ENCODE measurements at regions of chr1 and their contacts with region 1.

Region 1: DNA sequence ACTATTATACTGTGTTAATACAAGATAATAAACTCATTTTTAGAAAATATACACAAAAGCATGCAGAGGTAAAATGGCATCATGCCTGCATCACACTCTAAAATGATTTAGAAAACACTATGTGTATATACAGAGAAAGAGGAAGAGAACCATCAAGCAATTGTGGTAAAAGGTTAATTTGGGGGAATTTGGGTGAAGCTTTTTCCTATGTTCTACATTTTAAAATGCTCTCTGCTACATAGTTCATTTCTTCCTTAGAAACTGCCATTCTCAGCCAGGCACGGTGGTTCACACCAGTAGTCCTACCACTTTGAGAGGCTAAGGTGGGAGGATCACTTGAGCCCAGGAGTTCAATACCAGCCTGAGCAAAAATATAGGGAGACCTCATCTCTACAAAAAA is 44.1 kb downstream of the GON4L start:
- DNase-seq: no peak
- ATAC-seq: no peak
- H3K4me3 ChIP-seq: no peak overlapping the region
- H3K27ac ChIP-seq: no peak overlapping the region
- H3K4me1 ChIP-seq: no peaks in the 10 kb centered on the region
- H3K27me3 ChIP-seq: no peaks in the 10 kb centered on the region
- CTCF ChIP-seq: no peak
- POLR2A ChIP-seq: no peak

Region 2: DNA sequence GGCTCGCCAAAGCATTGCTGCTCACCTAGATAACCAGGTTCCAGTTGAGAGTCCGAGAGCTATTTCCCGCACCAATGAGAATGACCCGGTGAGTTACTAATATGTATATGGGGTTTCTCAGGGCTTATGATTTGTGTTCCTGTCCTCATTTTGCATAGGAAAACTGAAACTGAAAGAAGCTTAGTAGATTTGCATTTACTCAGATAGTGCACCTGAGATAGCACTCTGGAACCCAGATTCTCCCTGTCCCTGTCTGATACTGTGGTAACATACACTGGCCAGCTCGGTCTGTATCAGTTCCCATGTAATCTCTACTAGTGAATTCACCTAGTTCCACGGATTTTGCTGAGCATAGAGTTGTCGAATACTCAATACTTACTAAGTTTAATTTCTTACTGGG is 95.8 kb before region 1 on chr1:
- intact Hi-C with region 1: no loop called
- DNase-seq: no peak
- ATAC-seq: no peak
- H3K4me3 ChIP-seq: no peak overlapping the region
- H3K27ac ChIP-seq: no peak overlapping the region
- H3K4me1 ChIP-seq: peaks cover 0 to 13% (median 1%) of the 10 kb centered on the region in 12 donors
- H3K27me3 ChIP-seq: no peaks in the 10 kb centered on the region
- CTCF ChIP-seq: no peak
- POLR2A ChIP-seq: no peak

Region 3: DNA sequence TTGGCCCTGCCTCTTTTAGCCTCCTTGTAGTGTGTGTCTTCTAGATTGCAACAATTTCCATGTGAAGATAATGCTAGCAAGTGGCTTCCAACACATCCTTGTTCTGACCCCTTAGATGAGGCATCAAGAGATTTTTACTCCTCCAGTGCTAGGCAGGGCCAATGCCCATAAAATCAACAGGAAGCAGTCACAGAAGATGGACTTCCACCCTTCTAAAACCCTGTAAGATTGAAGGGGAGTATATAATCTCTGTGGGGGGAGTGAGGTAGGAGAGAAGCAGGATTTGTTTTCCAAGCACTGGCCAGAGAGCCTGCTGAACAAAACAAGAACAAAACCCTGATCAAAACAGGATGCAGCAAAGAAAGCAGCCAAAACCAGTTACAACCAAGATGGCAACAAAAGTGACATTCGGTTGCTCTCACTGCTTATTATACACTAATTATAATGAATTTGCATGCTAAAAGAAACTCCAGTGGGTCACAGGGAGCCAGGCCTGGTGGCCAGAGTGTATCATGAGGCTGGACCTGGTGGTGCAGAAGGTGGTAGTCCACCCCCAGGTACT is 32.1 kb after region 1 on chr1:
- intact Hi-C with region 1: loop called in 1 of 10 experiments (anchors 1 kb)
- DNase-seq: no peak
- ATAC-seq: no peak
- H3K4me3 ChIP-seq: no peak overlapping the region
- H3K27ac ChIP-seq: no peak overlapping the region
- H3K4me1 ChIP-seq: peaks cover 0 to 24% (median 5%) of the 10 kb centered on the region in 12 donors
- H3K27me3 ChIP-seq: no peaks in the 10 kb centered on the region
- CTCF ChIP-seq: no peak
- POLR2A ChIP-seq: no peak